ENCODE measurements at regions of chr9 and their contacts with region 1.

Region 1: GRCh38 chr9:96854073-96854876 is at the start of gene ZNF782:
- DNase-seq: peak; percentile 47
- H3K4me3 ChIP-seq: peak within 1 kb of the TSS; percentile 91
- CTCF ChIP-seq: no peak

Region 2: GRCh38 chr9:96867079-96867804 is 13.0 kb after region 1 on chr9:
- CTCF ChIA-PET with region 1: interaction called, 29 read pairs
- POLR2A ChIA-PET with region 1: no interaction called
- DNase-seq: no peak
- H3K4me3 ChIP-seq: no peak overlapping the region
- CTCF ChIP-seq: no peak

Region 3: GRCh38 chr9:97386733-97387503 is 532.6 kb after region 1 on chr9:
- CTCF ChIA-PET with region 1: interaction called, 16 read pairs
- POLR2A ChIA-PET with region 1: no interaction called
- DNase-seq: no peak
- H3K4me3 ChIP-seq: no peak overlapping the region
- CTCF ChIP-seq: peak; percentile 84

Region 4: DNA sequence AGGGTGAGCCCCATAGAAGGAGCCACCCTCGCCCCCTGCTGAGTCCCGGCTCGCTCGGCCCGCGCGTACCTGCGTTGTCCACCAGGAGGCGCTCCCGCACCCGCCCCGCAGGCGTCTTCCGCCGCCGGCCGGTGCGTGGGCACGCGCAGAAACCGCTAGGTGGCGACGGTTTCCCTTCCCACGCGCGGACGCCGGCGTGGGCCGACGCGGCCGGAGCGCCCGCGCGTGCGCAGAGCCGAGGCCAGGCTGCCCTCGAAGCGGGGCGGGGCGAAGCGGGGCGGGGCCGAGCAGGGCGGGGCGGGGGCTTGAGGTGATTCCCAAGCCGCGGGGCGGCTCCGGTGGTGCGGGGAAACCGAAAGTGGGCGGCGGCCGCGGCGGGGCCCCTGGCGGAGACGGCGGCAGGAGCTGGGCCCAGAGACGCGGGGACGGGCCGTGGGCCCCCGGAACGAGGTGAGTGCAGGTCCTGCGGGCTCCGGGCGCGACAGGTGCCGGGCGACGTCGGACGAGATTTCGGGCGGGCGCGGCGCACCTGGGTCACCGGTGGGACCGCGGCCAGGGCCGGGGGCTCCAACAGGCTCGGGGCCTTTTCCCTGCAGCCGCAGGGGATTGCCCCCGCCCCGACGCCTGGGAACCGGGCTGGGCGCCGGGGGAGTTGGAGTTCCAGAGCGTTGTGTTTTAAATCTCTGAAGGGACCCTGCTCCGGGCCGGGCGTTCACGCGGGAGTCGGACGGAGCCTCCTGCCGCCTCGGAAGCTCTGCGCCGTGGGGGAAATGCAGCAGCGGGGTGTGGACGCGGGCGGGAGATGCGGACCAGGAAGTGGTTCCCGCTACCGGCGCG is 557.7 kb after region 1 on chr9 and contains the start of gene TDRD7:
- CTCF ChIA-PET with region 1: interaction called, 197 read pairs
- POLR2A ChIA-PET with region 1: no interaction called
- DNase-seq: no peak
- H3K4me3 ChIP-seq: peak within 1 kb of the TSS; percentile 69
- CTCF ChIP-seq: peak; percentile 99

Region 5: GRCh38 chr9:97615439-97616072 is 761.3 kb after region 1 on chr9:
- CTCF ChIA-PET with region 1: interaction called, 56 read pairs
- POLR2A ChIA-PET with region 1: no interaction called
- DNase-seq: peak; percentile 5
- H3K4me3 ChIP-seq: no peak overlapping the region
- CTCF ChIP-seq: peak; percentile 63